ENCODE measurements at regions of chr10 and their contacts with region 1.

Region 1: DNA sequence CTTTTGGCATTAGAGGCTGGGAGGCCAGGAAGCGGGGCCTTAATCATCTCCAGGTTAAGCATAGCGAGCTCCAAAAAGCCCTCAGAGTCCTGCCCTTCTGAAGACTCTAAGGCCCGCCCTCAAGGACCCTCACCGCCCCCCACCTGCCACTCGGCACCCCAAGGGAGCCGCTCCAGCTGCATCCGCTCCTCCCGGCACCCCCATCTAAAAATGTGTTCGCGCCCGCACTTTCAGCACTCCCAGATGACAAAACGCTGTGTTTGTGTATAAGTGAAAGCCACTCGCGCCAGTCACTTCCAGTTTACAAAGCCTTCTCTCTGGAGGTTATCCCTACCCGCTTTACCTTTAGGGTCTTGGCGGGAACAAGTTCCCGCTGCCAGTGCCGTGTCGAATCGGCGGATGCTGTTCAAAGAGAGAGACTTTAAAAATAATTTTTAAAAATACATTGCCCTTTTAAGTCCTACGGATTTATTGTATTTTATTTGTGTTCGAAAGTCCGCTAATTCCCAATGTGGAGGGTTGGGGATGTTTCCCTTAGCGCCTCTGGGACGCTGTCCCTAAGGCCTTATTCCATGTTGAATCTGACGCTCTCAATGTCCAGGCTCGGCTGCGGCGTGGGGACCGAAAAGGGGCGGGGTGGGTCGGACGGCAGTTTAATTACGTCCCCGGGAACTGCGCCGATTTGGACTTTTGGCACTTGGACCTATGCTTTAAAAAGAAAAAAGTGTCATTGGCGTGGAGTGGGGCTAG is at the starts of genes DCLRE1A and NHLRC2:
- DNase-seq: peak; percentile 76
- H3K4me3 Mint-ChIP-seq: peak within 1 kb of the TSS; percentile 87
- H3K27ac Mint-ChIP-seq: peak within 1 kb of the TSS; percentile 96
- H3K4me1 Mint-ChIP-seq: peaks cover 42% of the 10 kb centered on the region
- H3K27me3 Mint-ChIP-seq: no peaks in the 10 kb centered on the region
- total RNA-seq, gene DCLRE1A: 13.8 to 16.6 TPM
- total RNA-seq, gene NHLRC2: 21.8 to 23.7 TPM

Region 2: GRCh38 chr10:114083040-114083439 is 228.9 kb after region 1 on chr10:
- CTCF ChIA-PET with region 1: no interaction called
- POLR2A ChIA-PET with region 1: no interaction called
- intact Hi-C with region 1: loop called (anchors 1 kb)
- DNase-seq: peak; percentile 31
- H3K4me3 Mint-ChIP-seq: no peak overlapping the region
- H3K27ac Mint-ChIP-seq: no peak overlapping the region
- H3K4me1 Mint-ChIP-seq: no peaks in the 10 kb centered on the region
- H3K27me3 Mint-ChIP-seq: no peaks in the 10 kb centered on the region

Region 3: GRCh38 chr10:114103284-114103683 is 249.1 kb after region 1 on chr10:
- CTCF ChIA-PET with region 1: no interaction called
- POLR2A ChIA-PET with region 1: no interaction called
- intact Hi-C with region 1: loop called (anchors 5 kb)
- DNase-seq: no peak
- H3K4me3 Mint-ChIP-seq: no peak overlapping the region
- H3K27ac Mint-ChIP-seq: no peak overlapping the region
- H3K4me1 Mint-ChIP-seq: peaks cover 25% of the 10 kb centered on the region
- H3K27me3 Mint-ChIP-seq: peaks cover 26% of the 10 kb centered on the region

Region 4: GRCh38 chr10:114173921-114174694 is 319.9 kb after region 1 on chr10 and contains the start of gene CCDC186:
- CTCF ChIA-PET with region 1: no interaction called
- POLR2A ChIA-PET with region 1: interaction called, 3 read pairs
- intact Hi-C with region 1: loop called (anchors 2 kb)
- DNase-seq: peak; percentile 99
- H3K4me3 Mint-ChIP-seq: peak within 1 kb of the TSS; percentile 93
- H3K27ac Mint-ChIP-seq: peak within 1 kb of the TSS; percentile 91
- H3K4me1 Mint-ChIP-seq: peaks cover 33% of the 10 kb centered on the region
- H3K27me3 Mint-ChIP-seq: no peaks in the 10 kb centered on the region
- total RNA-seq, gene CCDC186: 12.6 to 13.8 TPM

Measured in activated CD4-positive, alpha-beta memory T cell treated with anti-CD3 and anti-CD28 coated beads for 36 hours (primary cell).